K562 (cell line): ENCODE measurements at regions of chr2 and their contacts with region 1.

Region 1: GRCh38 chr2:85707304-85707703 is 13.1 kb downstream of the GNLY start:
- DNase-seq: peak; percentile 73 to 87 (median 74)
- ATAC-seq: peak; percentile 89
- H3K4me3 ChIP-seq: no peak overlapping the region
- H3K27ac ChIP-seq: no peak overlapping the region
- H3K4me1 ChIP-seq: peaks cover 5 to 29% of the 10 kb centered on the region in 2 experiments
- H3K27me3 ChIP-seq: peaks cover 0 to 9% of the 10 kb centered on the region in 2 experiments; a peak in 2 of 5 replicates
- CTCF ChIP-seq: peak; percentile 82 to 92 (median 88)
- EP300 ChIP-seq: 0 out of 2 replicates have a peak, but pooled peaks have one; percentile 10
- POLR2A ChIP-seq: no peak
- RAD21 ChIP-seq: peak; percentile 68 to 79

Region 2: GRCh38 chr2:85635636-85636035 is 71.7 kb before region 1 on chr2:
- CTCF ChIA-PET with region 1: interaction called, 4 read pairs
- POLR2A ChIA-PET with region 1: interaction called, 5 read pairs
- in situ Hi-C with region 1: no loop called
- intact Hi-C with region 1: loop called (anchors 2 kb)
- DNase-seq: no peak
- ATAC-seq: no peak
- H3K4me3 ChIP-seq: no peak overlapping the region
- H3K27ac ChIP-seq: no peak overlapping the region
- H3K4me1 ChIP-seq: no peaks in the 10 kb centered on the region
- H3K27me3 ChIP-seq: no peaks in the 10 kb centered on the region
- CTCF ChIP-seq: no peak
- EP300 ChIP-seq: no peak
- POLR2A ChIP-seq: no peak
- RAD21 ChIP-seq: no peak

Region 3: GRCh38 chr2:85873679-85874078 is 166.4 kb after region 1 on chr2:
- CTCF ChIA-PET with region 1: no interaction called
- POLR2A ChIA-PET with region 1: no interaction called
- in situ Hi-C with region 1: no loop called
- intact Hi-C with region 1: no loop called
- DNase-seq: peak; percentile 30 to 56 (median 46)
- ATAC-seq: peak; percentile 87
- H3K4me3 ChIP-seq: no peak overlapping the region
- H3K27ac ChIP-seq: no peak overlapping the region
- H3K4me1 ChIP-seq: peaks cover 0 to 7% of the 10 kb centered on the region in 2 experiments; a peak in 3 of 5 replicates
- H3K27me3 ChIP-seq: no peaks in the 10 kb centered on the region
- CTCF ChIP-seq: peak; percentile 44 to 61 (median 58)
- EP300 ChIP-seq: no peak
- POLR2A ChIP-seq: no peak
- RAD21 ChIP-seq: 0 out of 4 replicates have a peak, but pooled peaks of 1 of the 2 experiments have one; percentile 27